ENCODE measurements at regions of chr1 and their contacts with region 1.

Region 1: GRCh38 chr1:12124693-12125421 is 41.9 kb upstream of the TNFRSF1B start:
- DNase-seq: peak; percentile 77 to 81
- ATAC-seq: peak; percentile 49 to 85 (median 72)
- H3K4me3 ChIP-seq: peak overlapping the region in 3 of 10 donors; percentile 30 to 39 (median 30)
- H3K27ac ChIP-seq: peak overlapping the region; percentile 31 to 75 (median 64)
- H3K4me1 ChIP-seq: peaks cover 7 to 30% (median 19%) of the 10 kb centered on the region in 9 donors
- H3K27me3 ChIP-seq: peaks cover 0 to 14% (median 0%) of the 10 kb centered on the region in 7 donors
- CTCF ChIP-seq: peak; percentile 91 to 98 (median 97)

Region 2: GRCh38 chr1:12161662-12162458 is 37.0 kb after region 1 on chr1:
- intact Hi-C with region 1: loop called in 4 of 10 experiments (anchors 5 kb)
- DNase-seq: peak; percentile 92 to 94
- ATAC-seq: peak; percentile 88 to 97 (median 96)
- H3K4me3 ChIP-seq: peak overlapping the region in 2 of 10 donors; percentile 0 to 2
- H3K27ac ChIP-seq: peak overlapping the region; percentile 20 to 96 (median 81)
- H3K4me1 ChIP-seq: peaks cover 15 to 99% (median 32%) of the 10 kb centered on the region in 9 donors
- H3K27me3 ChIP-seq: peaks cover 0 to 4% (median 0%) of the 10 kb centered on the region in 7 donors
- CTCF ChIP-seq: no peak

Region 3: DNA sequence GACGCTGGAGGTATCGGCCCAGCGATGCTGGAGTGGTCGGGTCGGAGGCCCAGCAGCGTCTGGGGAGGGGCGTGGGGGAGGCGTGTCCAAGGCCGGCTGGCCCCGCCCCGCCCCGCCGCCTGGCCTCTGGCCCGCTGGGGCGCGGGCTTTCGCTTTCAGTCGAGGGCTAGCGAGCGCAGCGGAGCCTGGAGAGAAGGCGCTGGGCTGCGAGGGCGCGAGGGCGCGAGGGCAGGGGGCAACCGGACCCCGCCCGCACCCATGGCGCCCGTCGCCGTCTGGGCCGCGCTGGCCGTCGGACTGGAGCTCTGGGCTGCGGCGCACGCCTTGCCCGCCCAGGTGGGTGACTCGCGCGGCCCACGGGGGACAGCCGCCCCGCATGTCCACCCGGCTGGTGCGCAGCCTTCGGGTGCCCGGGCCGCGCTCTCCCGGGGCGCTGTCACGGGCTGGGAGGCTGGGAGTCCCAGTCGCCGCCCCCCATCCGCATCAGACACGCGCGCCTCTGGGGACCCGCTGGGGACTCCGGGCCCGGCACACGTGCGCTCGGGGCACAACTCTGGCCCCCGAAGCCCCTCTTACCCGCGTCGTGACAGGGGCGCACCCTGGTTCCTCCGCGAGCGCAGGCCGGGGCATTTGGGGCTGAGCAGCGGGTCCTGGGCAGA is 42.1 kb after region 1 on chr1 and contains the start of gene TNFRSF1B:
- intact Hi-C with region 1: loop called in 4 of 10 experiments (anchors 5 kb)
- DNase-seq: peak; percentile 67 to 82
- ATAC-seq: peak; percentile 46 to 86 (median 64)
- H3K4me3 ChIP-seq: peak within 1 kb of the TSS; percentile 73 to 94 (median 83)
- H3K27ac ChIP-seq: peak within 1 kb of the TSS; percentile 80 to 99 (median 94)
- H3K4me1 ChIP-seq: peaks cover 9 to 89% (median 56%) of the 10 kb centered on the region in 9 donors
- H3K27me3 ChIP-seq: peaks cover 0 to 8% (median 0%) of the 10 kb centered on the region in 7 donors
- CTCF ChIP-seq: no peak
- total RNA-seq, gene TNFRSF1B: 8.0 to 55.4 (median 15.7) TPM

Region 4: DNA sequence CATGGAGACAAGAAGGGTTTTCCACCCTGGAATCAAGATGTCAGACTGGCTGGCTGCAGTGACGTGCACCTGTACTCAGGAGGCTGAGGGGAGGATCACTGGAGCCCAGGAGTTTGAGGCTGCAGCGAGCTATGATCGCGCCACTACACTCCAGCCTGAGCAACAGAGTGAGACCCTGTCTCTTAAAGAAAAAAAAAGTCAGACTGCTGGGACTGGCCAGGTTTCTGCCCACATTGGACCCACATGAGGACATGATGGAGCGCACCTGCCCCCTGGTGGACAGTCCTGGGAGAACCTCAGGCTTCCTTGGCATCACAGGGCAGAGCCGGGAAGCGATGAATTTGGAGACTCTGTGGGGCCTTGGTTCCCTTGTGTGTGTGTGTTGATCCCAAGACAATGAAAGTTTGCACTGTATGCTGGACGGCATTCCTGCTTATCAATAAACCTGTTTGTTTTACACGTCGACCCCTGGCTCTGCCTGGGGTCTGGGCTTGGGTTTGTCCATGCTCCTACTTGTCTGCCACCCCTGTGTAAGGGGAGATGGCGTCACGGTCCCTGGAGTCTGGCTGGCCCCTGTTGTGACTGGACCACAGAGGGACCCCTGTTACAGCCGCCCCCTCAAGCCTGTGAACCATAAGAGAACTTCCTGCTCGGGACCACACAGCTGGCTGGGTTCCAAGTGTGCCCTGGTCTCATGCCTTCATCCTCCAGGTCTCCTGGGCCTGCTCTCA is 84.1 kb after region 1 on chr1:
- intact Hi-C with region 1: loop called (anchors 1 to 2 kb)
- DNase-seq: peak; percentile 83 to 89
- ATAC-seq: peak; percentile 85 to 93 (median 91)
- H3K4me3 ChIP-seq: no peak overlapping the region
- H3K27ac ChIP-seq: peak overlapping the region in 3 of 10 donors; percentile 4 to 43 (median 41)
- H3K4me1 ChIP-seq: peaks cover 0 to 17% (median 10%) of the 10 kb centered on the region in 9 donors
- H3K27me3 ChIP-seq: no peaks in the 10 kb centered on the region
- CTCF ChIP-seq: peak; percentile 91 to 98 (median 95)

Region 5: GRCh38 chr1:12376106-12377045 is 251.5 kb after region 1 on chr1:
- intact Hi-C with region 1: no loop called
- DNase-seq: no peak
- ATAC-seq: peak in 6 of 8 donors; percentile 46 to 63 (median 58)
- H3K4me3 ChIP-seq: no peak overlapping the region
- H3K27ac ChIP-seq: peak overlapping the region in 1 of 10 donors; percentile 37
- H3K4me1 ChIP-seq: peaks cover 0 to 30% (median 10%) of the 10 kb centered on the region in 9 donors
- H3K27me3 ChIP-seq: no peaks in the 10 kb centered on the region
- CTCF ChIP-seq: peak in 1 of 9 donors; percentile 12